Activated T-helper 1 cell treated with anti-CD3 and anti-CD28 coated beads, Interleukin-12 subunit alpha, Interleukin-12 subunit beta, Interleukin-2, Interleukin-4 antibody, amounts not matched to agents 30 ng/mL and 10 ng/mL and 1 ng/mL, durations not matched to agents 14 hours and 24 hours and 36 hours (primary cell): ENCODE measurements at regions of chr12 and their contacts with region 1.

Region 1: DNA sequence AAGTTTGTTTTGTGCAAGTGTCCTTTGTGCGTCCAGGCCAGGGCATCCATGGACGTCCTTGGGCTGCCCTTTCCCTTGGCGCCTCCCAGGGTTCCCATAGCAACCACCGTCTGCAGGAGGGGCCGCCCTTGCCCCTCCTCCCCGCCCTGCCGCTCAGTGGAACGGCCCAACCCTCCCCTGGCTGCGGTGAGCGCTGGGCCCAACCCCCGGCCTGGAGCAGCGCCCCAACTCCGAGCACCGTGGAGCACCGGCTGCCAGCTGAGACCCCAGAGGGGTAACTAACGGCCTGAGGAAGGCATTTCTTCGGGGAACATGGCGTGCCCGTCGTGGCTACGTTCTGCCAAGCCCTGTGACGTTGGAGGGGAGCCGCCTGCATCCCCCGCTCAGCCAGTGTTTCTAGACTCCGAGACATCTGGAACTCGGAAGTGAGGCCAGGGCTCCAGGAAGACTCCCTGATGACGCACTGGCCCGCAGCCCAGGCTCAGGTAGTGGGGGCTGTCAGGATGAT is 5.3 kb upstream of the ACACB start:
- DNase-seq: peak; percentile 34
- H3K4me3 Mint-ChIP-seq: peak overlapping the region; percentile 74
- H3K27ac Mint-ChIP-seq: peak overlapping the region; percentile 58
- H3K4me1 Mint-ChIP-seq: peaks cover 19% of the 10 kb centered on the region
- H3K27me3 Mint-ChIP-seq: no peaks in the 10 kb centered on the region

Region 2: DNA sequence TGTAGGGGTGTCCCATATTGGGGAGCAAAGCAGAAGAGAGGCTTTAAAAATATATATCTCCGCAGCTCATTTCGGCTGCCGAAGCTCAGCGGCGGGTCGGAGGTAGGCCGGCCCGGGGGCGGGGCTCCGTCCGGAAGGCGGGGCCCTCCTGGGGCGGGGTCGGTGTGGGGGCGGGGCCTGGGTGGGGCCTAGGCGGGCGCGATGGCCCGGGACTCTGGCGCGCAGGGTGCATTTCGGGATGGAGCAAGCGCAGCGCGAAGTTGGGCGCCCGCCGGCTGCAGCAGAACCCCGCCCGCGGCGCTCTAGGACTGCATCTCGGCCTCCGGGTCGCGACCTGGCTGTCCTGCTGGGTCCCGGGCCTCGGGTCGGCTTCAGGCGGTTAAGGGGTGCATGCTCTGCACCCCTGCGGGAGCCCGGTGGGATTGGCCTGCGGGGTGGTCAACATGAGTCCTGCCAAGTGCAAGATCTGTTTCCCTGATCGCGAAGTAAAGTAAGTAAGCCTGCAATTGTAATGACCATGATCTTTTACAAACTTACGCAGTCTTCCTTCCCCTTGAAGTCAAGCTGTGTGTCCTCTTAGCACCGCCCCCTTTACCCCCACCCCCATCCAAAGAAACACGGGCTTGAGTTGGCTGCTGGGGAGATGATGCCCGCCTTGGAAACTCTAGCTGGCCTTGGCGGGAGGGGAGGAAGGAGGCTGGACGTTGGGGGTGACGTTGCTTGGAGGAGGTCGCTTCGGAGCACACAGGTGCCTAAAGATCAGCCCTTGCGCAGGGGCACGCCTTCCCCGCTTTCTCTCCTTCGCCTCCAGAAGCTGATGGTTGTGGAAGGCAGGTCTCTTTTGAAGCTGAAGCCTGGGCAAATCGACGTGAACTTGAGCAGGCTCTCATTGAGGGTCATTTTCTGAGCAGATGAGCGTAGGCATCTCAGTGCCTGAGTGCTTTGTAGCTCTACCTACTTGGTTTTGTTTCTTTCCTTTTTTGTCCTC is 43.7 kb after region 1 on chr12:
- intact Hi-C with region 1: loop called (anchors 1 kb)
- DNase-seq: peak; percentile 71
- H3K4me3 Mint-ChIP-seq: peak overlapping the region; percentile 85
- H3K27ac Mint-ChIP-seq: peak overlapping the region; percentile 63
- H3K4me1 Mint-ChIP-seq: peaks cover 17% of the 10 kb centered on the region
- H3K27me3 Mint-ChIP-seq: peaks cover 15% of the 10 kb centered on the region

Region 3: GRCh38 chr12:109385339-109386067 is 274.5 kb after region 1 on chr12:
- intact Hi-C with region 1: loop called (anchors 1 kb)
- DNase-seq: no peak
- H3K4me3 Mint-ChIP-seq: no peak overlapping the region
- H3K27ac Mint-ChIP-seq: no peak overlapping the region
- H3K4me1 Mint-ChIP-seq: no peaks in the 10 kb centered on the region
- H3K27me3 Mint-ChIP-seq: peaks cover 7% of the 10 kb centered on the region

Region 4: GRCh38 chr12:109393437-109394345 is 282.6 kb after region 1 on chr12:
- intact Hi-C with region 1: loop called (anchors 1 kb)
- DNase-seq: peak; percentile 17
- H3K4me3 Mint-ChIP-seq: no peak overlapping the region
- H3K27ac Mint-ChIP-seq: no peak overlapping the region
- H3K4me1 Mint-ChIP-seq: no peaks in the 10 kb centered on the region
- H3K27me3 Mint-ChIP-seq: peaks cover 2% of the 10 kb centered on the region